Psoas muscle (tissue), 8 donors: ENCODE measurements at regions of chr5 and their contacts with region 1.

Region 1: GRCh38 chr5:122076664-122077365 is 1.2 kb downstream of the LOX start:
- DNase-seq: peak; percentile 77 to 81
- ATAC-seq: peak; percentile 48 to 78 (median 72)
- H3K4me3 ChIP-seq: peak overlapping the region; percentile 72
- H3K27ac ChIP-seq: no peak overlapping the region
- H3K4me1 ChIP-seq: peaks cover 4% of the 10 kb centered on the region
- H3K27me3 ChIP-seq: peaks cover 0 to 37% (median 0%) of the 10 kb centered on the region in 3 donors
- CTCF ChIP-seq: peak; percentile 54

Region 2: GRCh38 chr5:121968910-121969607 is 107.8 kb before region 1 on chr5:
- intact Hi-C with region 1: loop called in 1 of 2 experiments (anchors 10 kb)
- DNase-seq: no peak
- ATAC-seq: peak; percentile 87 to 92 (median 88)
- H3K4me3 ChIP-seq: peak overlapping the region; percentile 35
- H3K27ac ChIP-seq: peak overlapping the region; percentile 63
- H3K4me1 ChIP-seq: peaks cover 20% of the 10 kb centered on the region
- H3K27me3 ChIP-seq: no peaks in the 10 kb centered on the region
- CTCF ChIP-seq: no peak

Region 3: DNA sequence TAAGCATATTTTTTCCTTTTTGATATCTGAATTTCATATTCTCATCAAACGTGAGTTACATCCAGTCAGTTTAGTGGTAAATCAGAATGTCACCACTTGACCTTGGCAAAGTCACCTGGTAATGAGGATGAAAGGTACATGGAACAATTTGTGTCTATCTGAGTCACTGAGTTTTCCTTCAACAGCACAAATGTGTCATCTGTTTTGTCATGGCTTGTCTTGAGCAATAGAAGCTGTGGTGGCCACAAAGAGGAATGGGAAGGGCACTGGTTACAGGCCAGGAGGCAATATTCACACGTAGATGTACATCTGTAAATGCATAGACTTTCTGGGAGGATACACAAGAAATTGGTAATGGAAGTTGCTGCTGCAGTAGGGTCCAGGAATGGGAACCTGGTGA is 44.1 kb after region 1 on chr5:
- intact Hi-C with region 1: no loop called
- DNase-seq: no peak
- ATAC-seq: peak in 2 of 4 donors; percentile 44 to 63
- H3K4me3 ChIP-seq: no peak overlapping the region
- H3K27ac ChIP-seq: no peak overlapping the region
- H3K4me1 ChIP-seq: no peaks in the 10 kb centered on the region
- H3K27me3 ChIP-seq: no peaks in the 10 kb centered on the region
- CTCF ChIP-seq: no peak

Region 4: GRCh38 chr5:122183098-122183787 is 106.4 kb after region 1 on chr5:
- intact Hi-C with region 1: no loop called
- DNase-seq: peak; percentile 73
- ATAC-seq: peak; percentile 28 to 67 (median 58)
- H3K4me3 ChIP-seq: no peak overlapping the region
- H3K27ac ChIP-seq: no peak overlapping the region
- H3K4me1 ChIP-seq: peaks cover 9% of the 10 kb centered on the region
- H3K27me3 ChIP-seq: no peaks in the 10 kb centered on the region
- CTCF ChIP-seq: no peak

Region 5: GRCh38 chr5:122545986-122546385 is 469.2 kb after region 1 on chr5:
- intact Hi-C with region 1: no loop called
- DNase-seq: no peak
- ATAC-seq: no peak
- H3K4me3 ChIP-seq: no peak overlapping the region
- H3K27ac ChIP-seq: no peak overlapping the region
- H3K4me1 ChIP-seq: no peaks in the 10 kb centered on the region
- H3K27me3 ChIP-seq: peaks cover 0 to 2% (median 0%) of the 10 kb centered on the region in 3 donors
- CTCF ChIP-seq: no peak